HEK293T (cell line): ENCODE measurements at regions of chr17 and their contacts with region 1.

Region 1: GRCh38 chr17:67376737-67377487 is at the start of gene PITPNC1:
- DNase-seq: peak; percentile 73

Region 2: GRCh38 chr17:67386965-67387551 is 10.1 kb after region 1 on chr17:
- CTCF ChIA-PET with region 1: interaction called, 17 read pairs
- POLR2A ChIA-PET with region 1: no interaction called
- DNase-seq: peak; percentile 74

Region 3: GRCh38 chr17:67431249-67432048 is 54.5 kb after region 1 on chr17:
- CTCF ChIA-PET with region 1: no interaction called
- POLR2A ChIA-PET with region 1: no interaction called
- DNase-seq: no peak

Region 4: GRCh38 chr17:67602956-67603355 is 226.0 kb after region 1 on chr17:
- CTCF ChIA-PET with region 1: interaction called, 12 read pairs
- POLR2A ChIA-PET with region 1: no interaction called
- DNase-seq: peak; percentile 54